Right cardiac atrium (tissue), 5 donors: ENCODE measurements at regions of chr20 and their contacts with region 1.

Region 1: GRCh38 chr20:15113144-15113773 is 775.8 kb upstream of the FLRT3 start:
- DNase-seq: no peak
- ATAC-seq: no peak
- H3K4me3 ChIP-seq: no peak overlapping the region
- H3K27ac ChIP-seq: no peak overlapping the region
- H3K4me1 ChIP-seq: no peaks in the 10 kb centered on the region
- H3K27me3 ChIP-seq: no peaks in the 10 kb centered on the region

Region 2: DNA sequence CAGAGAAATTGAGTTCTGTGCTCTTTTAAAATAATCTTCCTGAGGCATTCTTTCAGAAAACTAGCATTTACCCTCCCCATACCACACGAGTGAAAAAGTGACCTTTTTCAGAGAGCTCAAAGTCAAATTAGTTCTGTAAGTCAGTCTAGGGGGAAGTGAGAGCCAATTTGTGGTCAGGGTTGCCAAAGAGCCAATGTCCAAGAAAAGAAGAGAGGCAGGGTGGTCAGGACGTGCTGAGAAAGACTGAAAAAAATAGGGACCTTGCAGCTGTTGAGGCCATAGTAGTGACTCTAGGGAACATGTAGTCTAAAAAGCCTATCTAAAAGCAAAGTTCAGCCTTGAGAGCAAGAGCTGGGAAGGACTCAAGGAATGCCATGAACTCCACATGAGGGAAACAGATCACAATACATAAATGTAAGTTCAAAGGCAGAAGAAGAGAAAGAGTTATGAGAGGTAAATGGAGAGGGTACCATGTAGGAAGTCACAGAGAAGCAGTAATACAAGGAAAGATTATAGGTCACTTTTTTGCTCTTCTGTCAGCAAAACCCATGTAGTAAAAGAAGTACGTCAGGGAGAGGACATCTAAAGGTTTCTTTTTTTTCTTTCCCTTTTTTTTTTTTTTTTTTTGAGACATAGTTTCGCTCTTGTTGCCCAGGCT is 210.7 kb before region 1 on chr20:
- intact Hi-C with region 1: loop called in 1 of 4 experiments (anchors 5 kb)
- DNase-seq: no peak
- ATAC-seq: no peak
- H3K4me3 ChIP-seq: no peak overlapping the region
- H3K27ac ChIP-seq: no peak overlapping the region
- H3K4me1 ChIP-seq: no peaks in the 10 kb centered on the region
- H3K27me3 ChIP-seq: no peaks in the 10 kb centered on the region